Naive thymus-derived CD4-positive, alpha-beta T cell (primary cell): ENCODE measurements at regions of chr10 and their contacts with region 1.

Region 1: DNA sequence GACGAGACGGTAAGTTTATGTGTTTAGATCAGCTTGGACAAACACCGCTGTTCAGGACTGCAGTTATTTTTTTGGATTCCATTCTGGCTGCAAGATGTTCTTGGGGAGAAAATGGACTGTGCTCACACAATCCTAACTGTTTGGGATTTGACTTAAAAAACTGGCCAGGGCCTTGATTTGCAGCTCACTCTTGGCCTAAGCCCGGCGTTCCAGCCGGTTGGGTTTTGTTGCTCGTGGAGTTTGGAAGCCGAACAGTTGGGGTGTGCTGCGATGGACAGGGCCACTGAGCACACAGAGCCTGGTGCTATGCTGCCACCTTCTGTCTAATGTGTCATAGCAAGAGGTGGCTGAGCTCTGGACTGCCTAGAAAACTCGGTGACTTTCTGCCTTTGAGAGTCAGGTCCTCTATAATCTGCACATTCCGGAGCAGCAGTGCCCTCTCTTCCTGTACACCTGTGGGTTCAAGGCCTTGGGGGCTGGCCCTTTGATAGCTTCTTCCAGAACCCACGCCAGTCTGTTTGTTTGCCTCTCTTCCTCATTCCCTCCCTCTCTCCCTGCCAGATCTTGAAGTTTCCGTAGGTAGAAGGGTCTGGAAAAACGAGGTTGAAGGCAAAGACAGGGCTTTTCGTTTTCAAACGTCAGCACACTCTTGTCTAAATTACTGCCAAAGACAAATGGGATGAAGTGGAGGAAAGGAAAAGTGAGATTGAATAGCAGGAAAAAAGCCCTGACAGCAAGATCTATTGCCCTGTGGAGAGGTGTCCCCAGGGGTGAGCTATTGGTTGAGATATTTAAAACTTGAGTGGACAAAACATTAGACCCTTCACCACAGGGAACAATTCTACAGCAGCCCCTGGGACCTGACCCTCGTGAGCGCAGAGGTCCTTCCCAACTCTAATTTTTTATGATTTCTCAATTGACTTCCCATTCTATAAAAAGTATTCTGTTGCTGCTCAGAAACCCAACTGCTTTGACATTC is 167.5 kb upstream of the HABP2 start:
- DNase-seq: peak; percentile 25 to 72 (median 61)
- ATAC-seq: peak; percentile 94
- H3K4me3 ChIP-seq: no peak overlapping the region
- H3K4me3 Mint-ChIP-seq: peak overlapping the region in 9 of 10 donors; percentile 8 to 69 (median 65)
- H3K27ac ChIP-seq: no peak overlapping the region
- H3K27ac Mint-ChIP-seq: peak overlapping the region in 4 of 9 donors; percentile 12 to 81 (median 56)
- H3K4me1 ChIP-seq: peaks cover 4 to 12% of the 10 kb centered on the region in 2 donors
- H3K4me1 Mint-ChIP-seq: peaks cover 14 to 37% (median 28%) of the 10 kb centered on the region in 7 donors
- H3K27me3 ChIP-seq: no peaks in the 10 kb centered on the region
- H3K27me3 Mint-ChIP-seq: peaks cover 0 to 49% (median 0%) of the 10 kb centered on the region in 5 donors

Region 2: GRCh38 chr10:112115799-112116385 is 1269.4 kb before region 1 on chr10:
- CTCF ChIA-PET with region 1: no interaction called
- POLR2A ChIA-PET with region 1: no interaction called
- intact Hi-C with region 1: loop called in 1 of 2 experiments (anchors 10 kb)
- DNase-seq: peak in 6 of 9 donors; percentile 14 to 35 (median 22)
- ATAC-seq: peak; percentile 70
- H3K4me3 ChIP-seq: no peak overlapping the region
- H3K4me3 Mint-ChIP-seq: no peak overlapping the region
- H3K27ac ChIP-seq: no peak overlapping the region
- H3K27ac Mint-ChIP-seq: no peak overlapping the region
- H3K4me1 ChIP-seq: no peaks in the 10 kb centered on the region
- H3K4me1 Mint-ChIP-seq: peaks cover 0 to 2% (median 0%) of the 10 kb centered on the region in 7 donors
- H3K27me3 ChIP-seq: no peaks in the 10 kb centered on the region
- H3K27me3 Mint-ChIP-seq: peaks cover 0 to 5% (median 0%) of the 10 kb centered on the region in 5 donors

Region 3: GRCh38 chr10:112314822-112315474 is 1070.4 kb before region 1 on chr10:
- CTCF ChIA-PET with region 1: no interaction called
- POLR2A ChIA-PET with region 1: no interaction called
- intact Hi-C with region 1: loop called (anchors 1 to 10 kb)
- DNase-seq: peak; percentile 32 to 70 (median 53)
- ATAC-seq: peak; percentile 85
- H3K4me3 ChIP-seq: no peak overlapping the region
- H3K4me3 Mint-ChIP-seq: no peak overlapping the region
- H3K27ac ChIP-seq: no peak overlapping the region
- H3K27ac Mint-ChIP-seq: no peak overlapping the region
- H3K4me1 ChIP-seq: no peaks in the 10 kb centered on the region
- H3K4me1 Mint-ChIP-seq: peaks cover 0 to 2% (median 0%) of the 10 kb centered on the region in 7 donors
- H3K27me3 ChIP-seq: no peaks in the 10 kb centered on the region
- H3K27me3 Mint-ChIP-seq: peaks cover 25 to 42% (median 33%) of the 10 kb centered on the region in 5 donors

Region 4: GRCh38 chr10:112446855-112447711 is 938.2 kb before region 1 on chr10 and contains the starts of genes VTI1A and ZDHHC6:
- CTCF ChIA-PET with region 1: no interaction called
- POLR2A ChIA-PET with region 1: no interaction called
- intact Hi-C with region 1: loop called in 1 of 2 experiments (anchors 1 kb)
- DNase-seq: peak; percentile 70 to 89 (median 84)
- ATAC-seq: peak; percentile 95
- H3K4me3 ChIP-seq: peak within 1 kb of the TSS; percentile 85
- H3K4me3 Mint-ChIP-seq: peak within 1 kb of the TSS; percentile 92 to 100 (median 96)
- H3K27ac ChIP-seq: peak within 1 kb of the TSS; percentile 90
- H3K27ac Mint-ChIP-seq: peak within 1 kb of the TSS; percentile 95 to 100 (median 99)
- H3K4me1 ChIP-seq: peaks cover 23 to 25% of the 10 kb centered on the region in 2 donors
- H3K4me1 Mint-ChIP-seq: peaks cover 31 to 81% (median 65%) of the 10 kb centered on the region in 7 donors
- H3K27me3 ChIP-seq: no peaks in the 10 kb centered on the region
- H3K27me3 Mint-ChIP-seq: no peaks in the 10 kb centered on the region
- total RNA-seq, gene VTI1A: 40.2 to 56.8 (median 51.4) TPM
- total RNA-seq, gene ZDHHC6: 34.3 to 66.3 (median 50.9) TPM

Region 5: GRCh38 chr10:112689299-112690072 is 695.8 kb before region 1 on chr10:
- CTCF ChIA-PET with region 1: no interaction called
- POLR2A ChIA-PET with region 1: no interaction called
- intact Hi-C with region 1: loop called in 1 of 2 experiments (anchors 1 kb)
- DNase-seq: no peak
- ATAC-seq: no peak
- H3K4me3 ChIP-seq: no peak overlapping the region
- H3K4me3 Mint-ChIP-seq: no peak overlapping the region
- H3K27ac ChIP-seq: no peak overlapping the region
- H3K27ac Mint-ChIP-seq: no peak overlapping the region
- H3K4me1 ChIP-seq: no peaks in the 10 kb centered on the region
- H3K4me1 Mint-ChIP-seq: peaks cover 0 to 5% (median 0%) of the 10 kb centered on the region in 7 donors
- H3K27me3 ChIP-seq: no peaks in the 10 kb centered on the region
- H3K27me3 Mint-ChIP-seq: no peaks in the 10 kb centered on the region

Region 6: DNA sequence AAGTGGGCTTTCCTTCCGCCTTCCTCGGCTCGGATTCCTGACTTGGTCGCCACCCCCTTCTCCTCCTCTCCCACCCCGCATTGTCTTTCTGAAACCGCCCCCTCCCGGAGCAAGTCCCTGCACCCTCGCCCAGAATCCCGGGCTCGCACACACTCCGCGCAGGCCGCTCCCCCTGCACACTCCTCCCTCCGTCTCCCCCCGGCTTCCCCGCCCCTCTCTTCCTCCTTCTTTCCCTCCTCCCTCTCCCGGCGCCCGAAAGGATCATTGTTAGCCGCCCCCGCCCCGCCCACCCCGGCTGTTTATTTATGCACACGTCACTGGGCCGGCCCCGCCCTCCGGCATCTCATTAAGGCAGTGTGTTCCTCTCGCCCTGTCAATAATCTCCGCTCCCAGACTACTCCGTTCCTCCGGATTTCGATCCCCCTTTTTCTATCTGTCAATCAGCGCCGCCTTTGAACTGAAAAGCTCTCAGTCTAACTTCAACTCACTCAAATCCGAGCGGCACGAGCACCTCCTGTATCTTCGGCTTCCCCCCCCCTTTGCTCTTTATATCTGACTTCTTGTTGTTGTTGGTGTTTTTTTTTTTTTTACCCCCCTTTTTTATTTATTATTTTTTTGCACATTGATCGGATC is 435.3 kb before region 1 on chr10 and contains the start of gene TCF7L2:
- CTCF ChIA-PET with region 1: interaction called, 3 read pairs
- POLR2A ChIA-PET with region 1: no interaction called
- intact Hi-C with region 1: loop called in 1 of 2 experiments (anchors 10 kb)
- DNase-seq: peak; percentile 24 to 62 (median 43)
- ATAC-seq: peak; percentile 79
- H3K4me3 ChIP-seq: peak within 1 kb of the TSS; percentile 62
- H3K4me3 Mint-ChIP-seq: peak within 1 kb of the TSS; percentile 84 to 98 (median 94)
- H3K27ac ChIP-seq: peak within 1 kb of the TSS; percentile 22
- H3K27ac Mint-ChIP-seq: peak within 1 kb of the TSS; percentile 52 to 94 (median 79)
- H3K4me1 ChIP-seq: peaks cover 0 to 3% of the 10 kb centered on the region in 2 donors
- H3K4me1 Mint-ChIP-seq: peaks cover 14 to 39% (median 25%) of the 10 kb centered on the region in 7 donors
- H3K27me3 ChIP-seq: peaks cover 0 to 3% of the 10 kb centered on the region in 2 donors
- H3K27me3 Mint-ChIP-seq: peaks cover 13 to 79% (median 25%) of the 10 kb centered on the region in 5 donors
- total RNA-seq, gene TCF7L2: 0.39 to 31.4 (median 3.5) TPM

Region 7: GRCh38 chr10:113126229-113127201 is 258.8 kb before region 1 on chr10:
- CTCF ChIA-PET with region 1: interaction called, 3 read pairs
- POLR2A ChIA-PET with region 1: no interaction called
- intact Hi-C with region 1: loop called (anchors 1 to 10 kb)
- DNase-seq: peak in 8 of 9 donors; percentile 11 to 56 (median 36)
- ATAC-seq: peak; percentile 97
- H3K4me3 ChIP-seq: no peak overlapping the region
- H3K4me3 Mint-ChIP-seq: peak overlapping the region in 8 of 10 donors; percentile 24 to 69 (median 56)
- H3K27ac ChIP-seq: no peak overlapping the region
- H3K27ac Mint-ChIP-seq: no peak overlapping the region
- H3K4me1 ChIP-seq: no peaks in the 10 kb centered on the region
- H3K4me1 Mint-ChIP-seq: peaks cover 0 to 10% (median 5%) of the 10 kb centered on the region in 7 donors
- H3K27me3 ChIP-seq: peaks cover 0 to 3% of the 10 kb centered on the region in 2 donors
- H3K27me3 Mint-ChIP-seq: peaks cover 55 to 65% (median 61%) of the 10 kb centered on the region in 5 donors

Region 8: DNA sequence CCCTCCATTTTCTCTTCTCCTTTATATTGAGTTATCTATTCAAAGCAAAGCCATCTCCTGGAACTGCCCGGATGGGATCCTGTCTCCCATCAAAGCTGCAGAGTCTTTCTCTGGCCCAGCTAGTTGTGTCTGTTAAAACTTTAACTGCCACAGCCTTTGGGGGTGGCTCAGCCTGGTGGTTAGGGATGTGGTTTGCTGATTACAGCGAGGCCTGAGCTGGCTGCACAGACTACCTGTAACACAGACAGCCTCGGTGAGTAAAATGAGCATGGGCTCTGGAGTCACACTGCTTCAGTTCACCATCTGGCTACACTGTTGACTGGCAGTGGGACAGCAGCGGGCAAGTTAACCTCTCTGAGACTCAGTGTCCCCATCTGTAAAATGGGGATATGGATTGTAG is 149.1 kb after region 1 on chr10:
- CTCF ChIA-PET with region 1: no interaction called
- POLR2A ChIA-PET with region 1: no interaction called
- intact Hi-C with region 1: no loop called
- DNase-seq: no peak
- ATAC-seq: no peak
- H3K4me3 ChIP-seq: no peak overlapping the region
- H3K4me3 Mint-ChIP-seq: no peak overlapping the region
- H3K27ac ChIP-seq: no peak overlapping the region
- H3K27ac Mint-ChIP-seq: no peak overlapping the region
- H3K4me1 ChIP-seq: no peaks in the 10 kb centered on the region
- H3K4me1 Mint-ChIP-seq: peaks cover 0 to 4% (median 0%) of the 10 kb centered on the region in 7 donors
- H3K27me3 ChIP-seq: no peaks in the 10 kb centered on the region
- H3K27me3 Mint-ChIP-seq: peaks cover 2 to 29% (median 15%) of the 10 kb centered on the region in 5 donors